A673 (cell line): ENCODE measurements at regions of chr5 and their contacts with region 1.

Region 1: DNA sequence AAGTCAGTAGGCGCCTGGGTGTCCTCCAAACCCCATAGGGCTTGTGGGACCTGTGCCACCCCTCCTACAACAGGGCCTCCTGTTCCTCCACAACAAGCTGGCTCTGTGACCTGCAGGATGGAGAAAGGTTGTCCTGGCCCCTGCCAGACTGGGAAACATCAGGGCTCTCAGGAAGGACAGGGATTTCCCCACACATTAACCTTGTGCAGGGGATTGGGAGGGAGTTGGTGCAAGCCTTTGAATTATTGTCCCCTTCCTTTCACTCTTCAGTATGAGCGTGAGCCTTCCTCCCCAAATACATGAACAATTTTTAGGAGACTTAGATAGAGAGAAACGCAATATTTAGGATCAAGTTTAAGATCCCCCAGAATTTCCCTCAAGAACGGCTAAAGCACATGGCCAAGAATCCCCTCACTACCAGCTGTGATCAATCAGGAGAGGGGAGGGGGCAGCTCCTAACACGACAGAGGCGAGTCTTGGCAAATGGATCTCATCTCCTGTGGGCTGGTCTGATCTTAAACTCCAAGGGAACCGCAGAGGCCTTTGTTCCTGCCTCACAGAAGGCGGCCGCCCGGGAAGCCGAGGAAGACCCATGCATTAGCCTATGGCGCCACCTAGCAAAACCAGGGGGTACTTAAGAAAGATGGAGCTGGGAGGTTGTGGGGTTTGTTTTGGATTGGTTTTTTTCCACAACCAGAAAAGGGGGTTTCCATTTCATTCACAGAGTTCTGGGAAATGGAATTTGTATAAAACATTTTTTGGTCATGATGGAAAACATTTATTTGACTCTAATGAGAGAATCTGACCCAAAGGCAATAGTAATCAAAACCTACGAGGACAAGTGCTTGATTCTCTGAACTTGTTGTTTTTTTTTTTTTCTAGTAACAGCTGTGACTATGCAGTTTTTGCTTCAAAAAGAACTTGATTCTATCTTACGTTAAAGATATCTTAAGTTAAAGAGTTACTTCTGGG is 36.1 kb upstream of the OSMR start:
- DNase-seq: peak; percentile 94
- H3K4me3 ChIP-seq: no peak overlapping the region
- H3K27ac ChIP-seq: peak overlapping the region; percentile 66
- H3K4me1 ChIP-seq: peaks cover 40% of the 10 kb centered on the region
- H3K27me3 ChIP-seq: no peaks in the 10 kb centered on the region
- CTCF ChIP-seq: peak; percentile 91

Region 2: GRCh38 chr5:38265546-38266179 is 544.0 kb before region 1 on chr5:
- CTCF ChIA-PET with region 1: no interaction called
- POLR2A ChIA-PET with region 1: no interaction called
- intact Hi-C with region 1: loop called (anchors 2 kb)
- DNase-seq: peak; percentile 77
- H3K4me3 ChIP-seq: no peak overlapping the region
- H3K27ac ChIP-seq: no peak overlapping the region
- H3K4me1 ChIP-seq: no peaks in the 10 kb centered on the region
- H3K27me3 ChIP-seq: peaks cover 12% of the 10 kb centered on the region
- CTCF ChIP-seq: peak; percentile 84

Region 3: DNA sequence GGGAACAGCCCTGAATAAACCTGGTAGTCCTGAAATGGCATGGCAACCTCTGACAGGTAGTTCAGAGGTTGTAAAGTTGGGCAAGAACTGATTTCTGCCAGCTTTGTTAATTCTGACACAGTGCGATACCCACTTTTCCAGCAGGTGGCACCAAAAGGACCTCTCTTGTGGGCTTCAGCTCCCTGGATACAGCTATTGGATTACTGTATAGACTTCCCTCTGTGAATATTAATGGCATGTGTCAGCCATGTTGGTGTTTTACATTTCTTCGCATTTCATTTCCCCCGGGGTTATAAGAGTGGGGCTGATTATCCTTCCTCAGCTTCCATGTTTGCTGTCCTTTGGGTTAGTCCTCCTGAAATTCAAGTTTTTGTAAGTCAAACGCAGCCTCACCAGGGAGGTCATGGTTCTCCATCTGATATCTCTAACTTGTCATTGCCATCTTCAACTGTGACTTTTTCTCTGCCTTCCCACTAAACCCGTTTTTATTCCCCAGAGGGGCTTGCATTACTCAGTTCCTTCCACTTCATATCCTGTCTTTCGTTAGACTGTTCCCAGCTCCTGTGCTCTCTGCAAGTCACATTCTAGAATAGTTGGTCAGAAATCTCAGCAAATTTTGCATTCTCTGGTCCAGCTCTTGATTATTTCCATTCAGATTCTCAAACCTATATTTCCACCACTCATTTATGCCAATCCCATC is 388.8 kb before region 1 on chr5:
- CTCF ChIA-PET with region 1: interaction called, 36 read pairs
- POLR2A ChIA-PET with region 1: no interaction called
- intact Hi-C with region 1: loop called (anchors 2 kb)
- DNase-seq: peak; percentile 89
- H3K4me3 ChIP-seq: no peak overlapping the region
- H3K27ac ChIP-seq: peak overlapping the region; percentile 1
- H3K4me1 ChIP-seq: peaks cover 13% of the 10 kb centered on the region
- H3K27me3 ChIP-seq: no peaks in the 10 kb centered on the region
- CTCF ChIP-seq: peak; percentile 89

Region 4: DNA sequence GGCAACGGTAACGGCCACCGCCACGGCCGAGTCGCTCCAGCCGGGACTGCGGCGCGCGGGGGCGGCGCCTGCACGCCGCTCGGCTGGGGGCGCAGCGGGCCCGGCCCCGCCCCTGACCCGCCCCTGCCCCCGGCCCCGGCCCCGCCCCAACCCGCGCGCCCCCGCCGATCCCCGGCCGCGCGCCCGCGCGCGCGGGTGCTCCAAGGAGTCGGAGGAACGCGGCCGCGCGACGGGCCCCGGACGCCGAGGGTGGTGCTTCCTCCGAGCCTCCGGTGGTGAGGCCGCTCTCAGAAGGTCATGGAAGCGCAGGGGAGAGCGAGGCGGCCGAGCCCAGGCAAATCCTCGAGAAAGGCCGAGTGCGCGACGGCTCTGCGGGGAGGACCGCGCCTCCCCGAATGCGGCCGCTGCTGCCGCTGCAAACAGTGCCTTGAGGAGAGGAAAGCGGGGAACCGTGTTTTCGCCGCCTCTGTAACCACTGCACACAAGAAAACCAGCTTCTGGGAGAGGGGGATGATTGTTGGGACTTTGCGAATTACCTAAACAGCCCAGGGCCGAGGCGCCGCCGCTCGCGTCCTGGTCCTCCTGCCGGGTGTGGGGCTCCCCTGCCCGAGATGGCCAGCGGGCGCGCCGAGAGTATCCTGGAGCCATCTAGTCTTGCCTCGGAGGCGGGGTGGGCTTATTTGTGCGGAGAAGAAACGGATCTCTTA is 252.9 kb before region 1 on chr5 and contains the start of gene LIFR:
- CTCF ChIA-PET with region 1: interaction called, 5 read pairs
- POLR2A ChIA-PET with region 1: no interaction called
- intact Hi-C with region 1: loop called (anchors 5 kb)
- DNase-seq: peak; percentile 89
- H3K4me3 ChIP-seq: peak within 1 kb of the TSS; percentile 73
- H3K27ac ChIP-seq: peak within 1 kb of the TSS; percentile 90
- H3K4me1 ChIP-seq: peaks cover 14% of the 10 kb centered on the region
- H3K27me3 ChIP-seq: no peaks in the 10 kb centered on the region
- CTCF ChIP-seq: no peak
- total RNA-seq, gene LIFR: 44.2 and 47.9 TPM in 2 replicates

Region 5: GRCh38 chr5:38719916-38720315 is 89.8 kb before region 1 on chr5:
- CTCF ChIA-PET with region 1: interaction called, 7 read pairs
- POLR2A ChIA-PET with region 1: interaction called, 3 read pairs
- intact Hi-C with region 1: loop called (anchors 2 kb)
- DNase-seq: peak; percentile 90
- H3K4me3 ChIP-seq: peak overlapping the region; percentile 11
- H3K27ac ChIP-seq: peak overlapping the region; percentile 90
- H3K4me1 ChIP-seq: peaks cover 87% of the 10 kb centered on the region
- H3K27me3 ChIP-seq: no peaks in the 10 kb centered on the region
- CTCF ChIP-seq: no peak

Region 6: GRCh38 chr5:38780950-38781349 is 28.7 kb before region 1 on chr5:
- CTCF ChIA-PET with region 1: interaction called, 3 read pairs
- POLR2A ChIA-PET with region 1: no interaction called
- intact Hi-C with region 1: loop called (anchors 1 kb)
- DNase-seq: peak; percentile 89
- H3K4me3 ChIP-seq: no peak overlapping the region
- H3K27ac ChIP-seq: no peak overlapping the region
- H3K4me1 ChIP-seq: peaks cover 24% of the 10 kb centered on the region
- H3K27me3 ChIP-seq: no peaks in the 10 kb centered on the region
- CTCF ChIP-seq: peak; percentile 48

Region 7: GRCh38 chr5:39337252-39337915 is 527.7 kb after region 1 on chr5:
- CTCF ChIA-PET with region 1: no interaction called
- POLR2A ChIA-PET with region 1: no interaction called
- intact Hi-C with region 1: no loop called
- DNase-seq: no peak
- H3K4me3 ChIP-seq: no peak overlapping the region
- H3K27ac ChIP-seq: no peak overlapping the region
- H3K4me1 ChIP-seq: no peaks in the 10 kb centered on the region
- H3K27me3 ChIP-seq: no peaks in the 10 kb centered on the region
- CTCF ChIP-seq: no peak

Region 8: DNA sequence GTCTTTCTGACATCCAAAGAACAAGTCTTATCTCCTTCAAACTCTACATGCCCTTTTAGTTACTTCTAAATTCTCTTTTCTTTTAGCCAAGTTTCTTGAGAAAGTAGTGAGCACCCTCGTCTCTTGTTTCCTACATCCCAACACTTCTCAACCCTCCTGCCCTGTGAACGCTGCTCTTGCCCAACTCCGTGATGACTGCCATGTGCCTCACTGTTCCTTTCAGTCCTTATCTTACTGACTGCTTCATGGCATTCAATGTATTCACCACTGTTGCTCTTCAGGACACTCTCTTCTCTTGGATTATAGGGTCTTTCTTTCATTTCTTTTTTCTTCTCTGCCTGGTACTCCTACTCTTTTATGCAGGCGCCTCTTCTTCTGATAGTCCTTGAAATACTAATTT is 539.8 kb after region 1 on chr5:
- CTCF ChIA-PET with region 1: no interaction called
- POLR2A ChIA-PET with region 1: no interaction called
- intact Hi-C with region 1: no loop called
- DNase-seq: no peak
- H3K4me3 ChIP-seq: no peak overlapping the region
- H3K27ac ChIP-seq: no peak overlapping the region
- H3K4me1 ChIP-seq: peaks cover 14% of the 10 kb centered on the region
- H3K27me3 ChIP-seq: no peaks in the 10 kb centered on the region
- CTCF ChIP-seq: no peak